GM10248 (cell line): ENCODE measurements at regions of chr6 and their contacts with region 1.

Region 1: DNA sequence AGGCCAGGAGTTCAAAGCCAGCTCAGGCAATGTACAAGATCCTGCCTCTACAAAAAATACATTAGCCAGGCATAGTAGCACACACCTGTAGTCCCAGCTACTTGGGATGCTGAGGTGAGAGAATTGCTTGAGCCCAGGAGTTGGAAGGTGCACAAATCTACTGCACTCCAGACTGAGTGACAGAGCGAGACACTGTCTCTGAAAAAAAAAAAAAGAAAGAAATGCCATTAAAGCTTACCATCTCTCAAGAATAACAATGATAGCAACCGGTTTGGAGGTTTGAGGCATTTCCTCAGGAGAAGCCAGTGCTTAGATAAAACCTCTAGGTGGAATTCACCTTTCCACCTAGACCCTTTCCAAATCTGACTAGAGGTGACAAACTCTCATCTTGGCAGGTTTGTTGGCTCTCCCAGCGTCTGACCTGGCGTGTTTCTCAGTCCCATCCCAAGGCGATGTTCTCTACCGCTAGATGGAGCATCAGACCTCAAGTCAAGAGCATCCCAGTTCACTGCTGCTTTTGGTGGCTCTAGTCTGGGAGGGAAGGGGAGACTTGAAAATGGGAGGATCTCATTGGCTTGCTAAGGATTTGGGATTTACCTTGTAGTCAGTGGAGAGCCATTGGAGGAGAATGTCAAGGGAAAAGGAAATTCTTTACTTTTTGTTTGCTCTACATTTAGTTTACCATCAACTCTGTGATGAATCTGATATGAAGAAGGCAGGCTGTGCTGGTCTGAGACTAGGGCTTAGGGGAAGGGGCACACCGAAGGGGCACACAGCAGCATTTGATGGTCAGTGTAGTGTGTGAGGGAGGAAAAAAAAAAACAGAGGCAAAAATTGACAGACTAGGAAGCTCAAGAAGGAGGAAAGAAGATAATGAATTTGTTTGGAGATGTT is 67.9 kb downstream of the NCOA7 start:
- DNase-seq: peak; percentile 45
- CTCF ChIP-seq: peak; percentile 62

Region 2: DNA sequence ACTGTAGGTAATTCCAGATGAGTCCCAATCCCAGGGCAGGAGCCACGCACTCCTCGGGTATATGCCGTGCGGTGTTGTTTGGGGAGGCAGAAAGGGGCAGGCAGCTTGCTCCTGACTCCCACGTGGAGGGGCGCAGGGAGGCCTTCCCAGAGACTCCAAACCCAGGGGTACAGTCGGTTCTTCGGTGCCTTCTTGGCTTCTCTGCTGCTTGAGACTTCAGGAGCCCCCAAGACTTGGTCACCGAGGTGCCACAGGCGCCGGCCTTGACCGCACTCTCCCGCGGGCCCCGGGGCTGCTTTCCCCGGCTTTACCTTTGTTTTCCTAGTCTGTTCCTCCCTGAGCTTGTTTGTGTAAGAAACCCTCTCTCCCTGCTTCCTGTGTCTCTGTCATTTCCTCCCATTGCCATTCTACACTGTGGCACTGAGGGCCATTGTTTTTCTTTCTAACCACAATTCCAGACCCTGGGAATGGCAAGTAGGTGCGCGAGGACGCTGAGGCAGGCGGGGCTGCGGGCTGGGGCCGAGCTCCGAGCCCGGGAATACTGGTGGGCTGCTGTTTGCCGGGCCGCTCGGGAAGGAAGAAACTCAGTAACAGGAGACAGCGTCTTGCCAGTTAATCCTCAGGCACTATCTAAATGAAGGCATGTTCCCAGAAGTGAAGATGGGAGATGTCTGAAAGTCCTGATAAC is 324.8 kb before region 1 on chr6:
- CTCF ChIA-PET with region 1: no interaction called
- POLR2A ChIA-PET with region 1: no interaction called
- DNase-seq: no peak
- CTCF ChIP-seq: no peak

Region 3: GRCh38 chr6:125834348-125834747 is 24.3 kb before region 1 on chr6:
- CTCF ChIA-PET with region 1: interaction called, 15 read pairs
- POLR2A ChIA-PET with region 1: no interaction called
- DNase-seq: no peak
- CTCF ChIP-seq: no peak

Region 4: GRCh38 chr6:125839471-125839870 is 19.2 kb before region 1 on chr6:
- CTCF ChIA-PET with region 1: interaction called, 18 read pairs
- POLR2A ChIA-PET with region 1: no interaction called
- DNase-seq: no peak
- CTCF ChIP-seq: no peak

Region 5: GRCh38 chr6:125844989-125845388 is 13.7 kb before region 1 on chr6:
- CTCF ChIA-PET with region 1: interaction called, 18 read pairs
- POLR2A ChIA-PET with region 1: no interaction called
- DNase-seq: no peak
- CTCF ChIP-seq: no peak

Region 6: GRCh38 chr6:126180585-126180984 is 321.9 kb after region 1 on chr6:
- CTCF ChIA-PET with region 1: no interaction called
- POLR2A ChIA-PET with region 1: no interaction called
- DNase-seq: no peak
- CTCF ChIP-seq: no peak